ENCODE measurements at regions of chr17 and their contacts with region 1.

Region 1: DNA sequence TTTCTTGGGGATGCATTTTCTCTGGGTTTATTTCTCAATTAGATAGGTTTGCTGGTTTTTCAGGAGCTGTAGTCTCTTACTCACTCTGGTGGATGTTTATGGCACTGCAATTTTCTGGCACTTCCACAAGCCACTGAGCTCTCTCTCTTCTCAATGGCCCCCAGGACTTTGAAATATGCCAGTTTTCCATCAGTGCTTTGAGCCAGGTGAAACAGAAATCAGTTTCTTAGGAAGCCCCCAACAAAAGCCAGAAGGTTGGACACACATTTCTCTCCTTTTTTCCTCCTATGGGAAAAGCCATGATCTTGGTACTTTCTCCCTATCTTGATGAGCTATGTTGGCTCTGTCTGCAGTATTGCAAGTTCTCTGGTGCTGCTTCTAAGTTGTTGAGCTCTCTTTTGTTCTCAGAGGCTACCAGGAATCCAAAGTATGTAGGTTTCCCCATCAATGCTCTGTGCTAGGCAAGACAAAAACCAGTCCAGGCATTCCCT is 90.7 kb upstream of the SMIM36 start:
- DNase-seq: peak; percentile 46
- CTCF ChIP-seq: peak; percentile 70

Region 2: DNA sequence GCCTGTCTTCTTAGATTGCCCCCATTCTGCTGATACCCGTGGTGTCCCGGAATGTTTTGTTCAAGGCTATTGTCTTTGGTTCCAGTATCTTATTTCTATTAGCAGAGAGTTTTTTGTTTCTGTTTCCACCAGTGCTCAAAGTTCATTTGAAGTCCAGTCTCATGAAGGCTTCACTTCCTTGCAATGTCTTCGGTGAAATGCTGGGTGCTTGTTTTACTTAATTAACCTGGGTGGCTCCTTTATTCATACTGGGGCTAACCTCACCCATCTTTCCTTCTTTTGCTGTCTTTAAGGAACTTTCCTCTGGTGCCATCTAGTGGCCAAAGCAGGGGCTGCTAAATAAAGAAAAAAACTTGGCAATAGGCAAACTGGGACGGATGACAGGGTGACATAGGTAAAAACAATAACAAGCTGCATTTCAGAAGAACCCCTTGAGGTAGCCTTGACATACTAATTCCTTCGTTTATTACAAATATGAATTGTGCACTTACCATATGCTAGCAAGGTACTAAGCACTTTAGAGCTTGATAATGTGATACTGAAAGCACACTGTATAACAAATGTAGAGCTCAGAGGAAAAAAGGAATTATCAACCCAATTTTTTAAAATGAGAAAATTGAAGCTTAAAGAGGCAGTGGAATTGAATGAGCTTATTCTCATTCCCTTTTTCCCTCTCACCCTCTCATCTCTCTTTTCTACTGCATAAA is 87.9 kb before region 1 on chr17:
- CTCF ChIA-PET with region 1: interaction called, 20 read pairs
- POLR2A ChIA-PET with region 1: no interaction called
- DNase-seq: peak; percentile 58
- CTCF ChIP-seq: peak; percentile 90

Region 3: DNA sequence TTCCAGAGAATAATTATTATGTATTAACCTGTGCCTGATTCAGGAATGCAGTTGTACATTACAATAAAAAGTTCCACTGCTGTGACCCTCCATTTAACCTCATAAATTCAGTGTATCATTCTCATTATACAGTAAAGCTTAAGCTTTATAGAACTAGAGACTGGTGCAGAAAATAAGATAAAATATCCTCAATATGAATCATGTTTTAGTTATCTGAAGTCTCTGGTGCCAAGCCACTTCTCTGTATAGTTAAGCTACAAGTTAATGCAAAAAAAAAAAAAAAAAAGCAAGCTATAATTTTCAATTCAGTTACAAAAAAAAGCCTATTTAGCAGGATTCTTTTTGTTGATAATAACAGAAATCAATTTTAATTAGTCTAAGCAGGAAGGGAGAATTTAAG is 68.3 kb before region 1 on chr17:
- CTCF ChIA-PET with region 1: interaction called, 119 read pairs
- POLR2A ChIA-PET with region 1: no interaction called
- DNase-seq: no peak
- CTCF ChIP-seq: no peak

Region 4: GRCh38 chr17:55549140-55549539 is 52.8 kb before region 1 on chr17:
- CTCF ChIA-PET with region 1: interaction called, 16 read pairs
- POLR2A ChIA-PET with region 1: no interaction called
- DNase-seq: no peak
- CTCF ChIP-seq: peak; percentile 57

Region 5: DNA sequence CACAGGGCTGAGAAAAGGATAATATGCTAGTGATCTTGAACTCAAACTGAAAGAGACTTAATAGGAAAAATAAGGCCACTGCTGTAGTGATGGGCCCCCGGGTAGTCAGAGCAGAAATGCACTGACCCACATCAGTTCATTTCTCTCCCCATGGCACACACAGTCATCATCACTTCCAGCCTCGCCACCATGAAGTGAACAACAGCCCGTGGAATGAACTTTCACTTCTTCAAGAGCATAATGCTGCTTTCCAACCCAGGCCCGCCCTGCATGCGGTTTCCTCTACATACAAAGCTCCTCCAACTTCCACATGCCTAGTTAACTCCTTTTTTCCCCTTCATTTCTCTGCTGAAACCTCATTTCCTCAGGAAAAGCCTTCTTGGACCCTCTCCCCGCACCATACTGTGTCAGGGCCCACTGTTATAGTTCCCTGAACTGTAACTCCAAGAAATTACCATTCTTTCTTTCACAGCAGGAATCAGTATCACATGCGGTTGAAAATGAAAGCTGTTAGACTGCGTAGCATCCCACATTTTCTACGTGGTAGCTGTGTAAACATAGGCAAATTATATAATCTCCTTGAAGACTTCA is 24.8 kb before region 1 on chr17:
- CTCF ChIA-PET with region 1: interaction called, 12 read pairs
- POLR2A ChIA-PET with region 1: no interaction called
- DNase-seq: peak; percentile 40
- CTCF ChIP-seq: no peak

Region 6: GRCh38 chr17:55588446-55589242 is 13.3 kb before region 1 on chr17:
- CTCF ChIA-PET with region 1: interaction called, 26 read pairs
- POLR2A ChIA-PET with region 1: no interaction called
- DNase-seq: no peak
- CTCF ChIP-seq: no peak

Region 7: DNA sequence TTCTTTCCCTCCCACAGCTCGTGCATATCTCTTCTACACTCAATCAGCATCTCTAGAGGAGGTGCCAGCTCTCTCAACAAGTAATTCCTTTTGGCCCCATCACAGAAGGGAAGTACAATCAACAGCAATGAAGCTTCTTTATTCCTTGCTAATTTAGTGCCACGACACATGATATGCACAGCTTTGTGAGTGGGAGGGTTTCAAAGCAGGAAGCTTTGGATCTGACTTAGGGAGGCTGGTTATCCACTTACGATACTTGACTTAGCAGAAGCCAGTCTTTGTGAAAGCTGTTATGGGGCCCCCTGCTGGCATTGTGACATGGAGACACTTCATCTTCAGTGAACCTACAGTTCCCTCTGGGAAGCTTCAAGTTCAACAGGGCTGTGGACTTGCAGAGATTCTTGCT is 39.8 kb after region 1 on chr17:
- CTCF ChIA-PET with region 1: interaction called, 12 read pairs
- POLR2A ChIA-PET with region 1: no interaction called
- DNase-seq: peak; percentile 26
- CTCF ChIP-seq: peak; percentile 35

Measured in GM10248 (cell line).